ENCODE measurements at regions of chr1 and their contacts with region 1.

Region 1: DNA sequence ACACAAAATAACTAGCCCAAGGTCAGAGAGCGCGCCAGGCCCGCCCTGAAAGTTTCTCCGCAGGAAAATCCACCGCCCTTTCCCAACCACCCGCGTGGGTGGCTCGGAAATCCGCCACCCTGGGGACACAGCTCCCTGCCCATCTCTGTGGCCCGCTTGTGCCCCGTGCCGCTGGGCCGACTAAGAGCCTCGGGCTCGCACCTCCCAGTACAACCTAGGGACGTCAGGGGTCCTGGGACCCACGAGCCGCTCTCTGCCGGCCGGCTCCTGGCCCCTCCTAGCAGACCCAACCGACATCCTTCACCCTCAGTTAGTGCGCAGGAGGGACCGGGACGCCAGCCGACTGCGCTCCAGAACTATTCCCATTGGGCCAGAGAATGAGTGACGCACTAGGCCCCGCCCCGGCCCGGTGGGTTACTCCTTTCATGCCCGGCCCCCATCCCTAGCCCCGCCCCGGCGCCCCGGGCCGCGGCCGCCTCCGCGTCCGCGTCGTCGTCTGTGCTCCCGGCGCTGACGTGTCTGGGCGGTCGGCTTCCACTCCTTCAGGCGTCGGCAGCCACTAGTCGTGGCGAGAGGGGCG is 395 bp upstream of the UAP1 start:
- DNase-seq: peak; percentile 97
- ATAC-seq: peak; percentile 92 to 94
- H3K4me3 ChIP-seq: peak overlapping the region; percentile 68 to 93 (median 87)
- H3K27ac ChIP-seq: peak overlapping the region; percentile 94 to 97 (median 96)
- H3K4me1 ChIP-seq: peaks cover 16 to 23% of the 10 kb centered on the region in 2 donors
- H3K27me3 ChIP-seq: no peaks in the 10 kb centered on the region
- CTCF ChIP-seq: no peak
- POLR2A ChIP-seq: no peak

Region 2: GRCh38 chr1:162069328-162070093 is 491.6 kb before region 1 on chr1 and contains the start of gene NOS1AP:
- in situ Hi-C with region 1: no loop called
- intact Hi-C with region 1: loop called (anchors 1 kb)
- DNase-seq: peak; percentile 45 to 61
- ATAC-seq: peak; percentile 92 to 93
- H3K4me3 ChIP-seq: peak within 1 kb of the TSS; percentile 62 to 76 (median 72)
- H3K27ac ChIP-seq: peak within 1 kb of the TSS in 3 of 4 donors; percentile 54 to 60 (median 54)
- H3K4me1 ChIP-seq: peaks cover 12% of the 10 kb centered on the region in 2 donors
- H3K27me3 ChIP-seq: peaks cover 0 to 6% (median 0%) of the 10 kb centered on the region in 3 donors
- CTCF ChIP-seq: no peak
- POLR2A ChIP-seq: peak; percentile 35 to 60
- total RNA-seq, gene NOS1AP: 0.20 to 0.40 (median 0.25) TPM

Region 3: DNA sequence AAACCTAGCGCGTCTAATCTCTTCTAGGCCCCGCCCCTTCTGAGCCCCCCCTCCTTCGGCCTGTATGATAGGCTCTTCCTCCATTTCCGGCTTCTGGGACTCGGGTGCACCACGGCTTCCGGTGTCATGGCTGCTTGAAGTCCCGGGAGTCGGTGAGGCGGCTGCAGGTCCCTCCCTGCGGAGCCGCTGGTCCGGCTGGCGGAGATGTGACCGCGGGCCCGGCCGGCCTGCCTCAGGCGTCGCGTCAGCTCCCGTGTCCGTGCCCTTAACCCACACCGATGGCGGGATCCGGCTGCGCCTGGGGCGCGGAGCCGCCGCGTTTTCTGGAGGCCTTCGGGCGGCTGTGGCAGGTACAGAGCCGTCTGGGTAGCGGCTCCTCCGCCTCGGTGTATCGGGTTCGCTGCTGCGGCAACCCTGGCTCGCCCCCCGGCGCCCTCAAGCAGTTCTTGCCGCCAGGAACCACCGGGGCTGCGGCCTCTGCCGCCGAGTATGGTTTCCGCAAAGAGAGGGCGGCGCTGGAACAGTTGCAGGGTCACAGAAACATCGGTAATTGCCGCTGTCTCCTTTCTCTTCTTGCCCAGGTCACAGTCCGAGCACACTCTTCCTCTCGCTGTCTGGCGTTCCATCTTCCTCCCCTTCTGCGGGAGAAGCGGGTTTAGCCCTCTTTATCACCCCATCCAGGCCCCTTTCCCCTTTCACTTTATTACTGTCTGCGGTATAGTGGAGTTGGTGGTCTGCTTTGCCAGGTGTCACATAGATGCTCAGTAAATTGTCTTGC is 63.2 kb before region 1 on chr1 and contains the start of gene UHMK1:
- in situ Hi-C with region 1: loop called in 2 of 4 experiments (anchors 5 to 10 kb)
- intact Hi-C with region 1: loop called (anchors 2 kb)
- DNase-seq: peak; percentile 85 to 89
- ATAC-seq: peak; percentile 91 to 99
- H3K4me3 ChIP-seq: peak within 1 kb of the TSS; percentile 88 to 98 (median 91)
- H3K27ac ChIP-seq: peak within 1 kb of the TSS; percentile 88 to 96 (median 95)
- H3K4me1 ChIP-seq: peaks cover 28 to 36% of the 10 kb centered on the region in 2 donors
- H3K27me3 ChIP-seq: no peaks in the 10 kb centered on the region
- CTCF ChIP-seq: no peak
- POLR2A ChIP-seq: peak; percentile 63 to 72
- total RNA-seq, gene UHMK1: 60.2 to 91.0 (median 79.7) TPM

Region 4: DNA sequence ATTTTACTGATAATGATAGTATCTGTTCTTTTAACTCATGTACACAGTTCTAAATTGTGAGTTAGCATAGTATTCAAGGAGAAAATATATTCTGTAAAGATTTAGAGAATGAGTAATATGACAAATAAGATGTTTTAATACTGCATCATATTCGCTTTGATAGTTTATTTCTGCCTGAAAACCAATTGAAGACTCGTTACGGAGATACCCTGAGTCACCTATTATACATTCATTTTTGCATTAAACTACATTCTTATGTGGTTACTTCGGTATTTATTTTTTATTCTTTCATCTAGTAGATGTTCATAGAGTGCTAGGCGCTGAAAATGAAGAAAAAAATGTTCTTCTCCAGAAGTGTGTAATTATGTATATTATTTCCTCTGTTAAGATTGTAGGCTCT is 58.2 kb before region 1 on chr1:
- in situ Hi-C with region 1: loop called in 2 of 4 experiments (anchors 5 to 10 kb)
- intact Hi-C with region 1: no loop called
- DNase-seq: no peak
- ATAC-seq: no peak
- H3K4me3 ChIP-seq: no peak overlapping the region
- H3K27ac ChIP-seq: peak overlapping the region in 1 of 4 donors; percentile 96
- H3K4me1 ChIP-seq: peaks cover 28 to 36% of the 10 kb centered on the region in 2 donors
- H3K27me3 ChIP-seq: no peaks in the 10 kb centered on the region
- CTCF ChIP-seq: no peak
- POLR2A ChIP-seq: no peak

Region 5: GRCh38 chr1:162872981-162873380 is 311.9 kb after region 1 on chr1:
- in situ Hi-C with region 1: no loop called
- intact Hi-C with region 1: no loop called
- DNase-seq: no peak
- ATAC-seq: no peak
- H3K4me3 ChIP-seq: no peak overlapping the region
- H3K27ac ChIP-seq: no peak overlapping the region
- H3K4me1 ChIP-seq: no peaks in the 10 kb centered on the region
- H3K27me3 ChIP-seq: no peaks in the 10 kb centered on the region
- CTCF ChIP-seq: no peak
- POLR2A ChIP-seq: no peak

Region 6: DNA sequence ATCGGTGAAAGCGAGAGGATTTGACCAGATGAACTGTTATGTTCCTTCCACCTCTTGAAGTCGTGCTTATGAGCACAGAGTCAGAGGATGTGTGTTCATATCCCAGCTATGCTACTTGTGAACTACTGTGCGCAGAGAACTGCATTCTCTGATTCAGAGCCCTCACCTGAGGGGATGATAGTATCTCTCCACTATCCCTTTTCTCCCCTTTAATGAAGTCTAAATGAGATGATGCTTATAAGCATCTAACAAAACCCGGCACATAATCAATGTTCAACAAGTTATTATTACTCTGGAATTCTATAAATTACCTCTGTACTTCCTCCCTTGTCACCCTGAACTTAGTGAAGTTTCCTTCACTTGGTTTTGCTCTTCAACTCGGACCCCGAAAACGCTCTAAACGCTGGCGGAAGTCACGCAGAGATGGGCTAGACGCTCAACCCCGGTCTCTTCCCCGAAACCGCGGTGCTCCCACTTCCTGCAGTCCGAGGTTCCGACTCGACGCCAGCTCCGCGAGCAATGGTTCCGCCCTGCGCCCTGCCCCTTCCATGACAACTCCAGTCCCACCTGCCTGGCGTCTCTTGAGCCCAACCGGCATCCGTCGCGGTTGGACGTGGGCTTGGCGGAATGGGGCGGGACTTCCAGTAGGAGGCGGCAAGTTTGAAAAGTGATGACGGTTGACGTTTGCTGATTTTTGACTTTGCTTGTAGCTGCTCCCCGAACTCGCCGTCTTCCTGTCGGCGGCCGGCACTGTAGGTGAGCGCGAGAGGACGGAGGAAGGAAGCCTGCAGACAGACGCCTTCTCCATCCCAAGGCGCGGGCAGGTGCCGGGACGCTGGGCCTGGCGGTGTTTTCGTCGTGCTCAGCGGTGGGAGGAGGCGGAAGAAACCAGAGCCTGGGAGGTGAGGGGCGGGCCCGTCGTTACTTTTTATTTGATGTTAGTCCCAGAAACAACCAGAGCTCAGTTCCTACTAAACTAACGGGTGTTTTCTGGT is 760.5 kb after region 1 on chr1 and contains the start of gene NUF2:
- in situ Hi-C with region 1: no loop called
- intact Hi-C with region 1: loop called (anchors 5 kb)
- DNase-seq: peak; percentile 95 to 96
- ATAC-seq: peak; percentile 99
- H3K4me3 ChIP-seq: peak within 1 kb of the TSS; percentile 76 to 78 (median 78)
- H3K27ac ChIP-seq: peak within 1 kb of the TSS; percentile 69 to 76 (median 72)
- H3K4me1 ChIP-seq: peaks cover 16 to 19% of the 10 kb centered on the region in 2 donors
- H3K27me3 ChIP-seq: no peaks in the 10 kb centered on the region
- CTCF ChIP-seq: peak in 2 of 5 experiments; percentile 4 to 18
- POLR2A ChIP-seq: peak in 1 of 2 donors; percentile 8
- total RNA-seq, gene NUF2: not detected